Activated CD4-positive, alpha-beta memory T cell treated with anti-CD3 and anti-CD28 coated beads, Interleukin-2, amount 10 ng/mL, durations not matched to agents 7 days and 5 days (primary cell): ENCODE measurements at regions of chr1 and their contacts with region 1.

Region 1: DNA sequence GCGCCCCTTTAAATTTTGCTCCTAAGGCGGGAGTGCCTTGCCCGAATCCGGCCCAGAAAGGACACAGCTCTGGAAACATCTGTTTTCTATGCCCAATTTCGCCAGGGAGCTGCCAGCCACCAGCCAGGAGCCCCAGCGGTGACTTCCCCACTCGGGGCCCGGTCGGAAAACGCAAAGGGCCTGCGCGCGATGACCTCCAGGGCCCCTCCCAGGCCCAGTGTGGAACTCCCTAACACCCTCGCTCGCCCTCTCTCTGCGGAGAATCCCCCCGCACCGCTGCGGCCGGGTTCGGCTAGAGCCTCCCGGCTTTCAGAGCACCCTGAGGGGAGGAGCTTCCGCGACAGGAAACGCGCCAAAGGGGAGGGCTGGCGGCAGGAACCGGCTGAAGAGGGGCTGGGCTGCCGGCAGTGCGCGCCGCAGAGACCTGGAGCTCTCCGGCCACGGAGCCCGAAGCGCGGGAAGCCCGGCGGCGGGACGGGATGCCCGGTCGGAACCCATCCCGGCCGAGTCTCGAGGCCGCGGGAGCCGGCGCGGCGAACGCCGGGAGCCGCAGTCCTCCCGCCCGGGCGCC is 505 bp downstream of the CLSPN start:
- DNase-seq: peak; percentile 89
- H3K4me3 Mint-ChIP-seq: peak overlapping the region; percentile 80
- H3K27ac Mint-ChIP-seq: peak overlapping the region; percentile 74
- H3K4me1 Mint-ChIP-seq: peaks cover 40% of the 10 kb centered on the region
- H3K27me3 Mint-ChIP-seq: no peaks in the 10 kb centered on the region

Region 2: GRCh38 chr1:35505908-35506798 is 263.1 kb before region 1 on chr1:
- CTCF ChIA-PET with region 1: no interaction called
- POLR2A ChIA-PET with region 1: interaction called, 15 read pairs
- DNase-seq: peak; percentile 80
- H3K4me3 Mint-ChIP-seq: peak overlapping the region; percentile 45
- H3K27ac Mint-ChIP-seq: peak overlapping the region; percentile 93
- H3K4me1 Mint-ChIP-seq: peaks cover 52% of the 10 kb centered on the region
- H3K27me3 Mint-ChIP-seq: peaks cover 4% of the 10 kb centered on the region

Region 3: DNA sequence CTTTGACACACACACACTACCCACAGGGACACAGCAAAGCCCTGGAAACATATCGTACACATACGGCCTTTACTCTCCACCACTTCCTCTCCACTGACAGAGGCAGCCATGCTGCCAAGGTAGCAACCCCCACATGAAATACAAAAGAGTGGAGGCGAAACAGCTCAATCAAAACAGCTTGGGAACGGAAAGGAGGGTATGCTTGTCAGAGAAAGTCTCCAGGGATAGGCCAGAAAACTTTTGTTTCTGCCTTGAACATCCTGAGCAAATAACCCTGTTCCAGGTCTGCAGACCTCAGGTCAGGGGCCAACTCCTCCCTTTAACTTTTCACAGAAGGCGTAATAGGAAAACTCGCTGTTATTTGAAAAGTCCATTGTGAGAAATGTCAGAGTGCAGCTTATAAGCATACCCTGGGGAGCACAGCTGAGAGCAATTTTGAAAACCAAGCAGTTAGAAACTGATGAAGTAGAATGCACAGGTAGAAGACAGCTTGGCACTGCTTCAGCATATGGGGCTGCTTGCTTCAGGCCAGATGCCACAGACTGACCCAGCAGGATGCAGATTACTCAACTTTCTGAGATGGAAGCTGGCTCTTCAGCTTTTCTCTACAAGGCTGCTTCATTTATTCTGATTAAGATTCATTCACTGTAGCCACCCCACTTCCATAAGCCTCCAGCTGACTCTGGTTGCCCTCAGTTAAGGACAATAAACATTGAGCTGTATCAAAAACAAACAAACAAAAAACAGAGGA is 230.0 kb before region 1 on chr1:
- CTCF ChIA-PET with region 1: no interaction called
- POLR2A ChIA-PET with region 1: no interaction called
- DNase-seq: peak; percentile 58
- H3K4me3 Mint-ChIP-seq: peak overlapping the region; percentile 58
- H3K27ac Mint-ChIP-seq: peak overlapping the region; percentile 92
- H3K4me1 Mint-ChIP-seq: peaks cover 45% of the 10 kb centered on the region
- H3K27me3 Mint-ChIP-seq: no peaks in the 10 kb centered on the region

Region 4: DNA sequence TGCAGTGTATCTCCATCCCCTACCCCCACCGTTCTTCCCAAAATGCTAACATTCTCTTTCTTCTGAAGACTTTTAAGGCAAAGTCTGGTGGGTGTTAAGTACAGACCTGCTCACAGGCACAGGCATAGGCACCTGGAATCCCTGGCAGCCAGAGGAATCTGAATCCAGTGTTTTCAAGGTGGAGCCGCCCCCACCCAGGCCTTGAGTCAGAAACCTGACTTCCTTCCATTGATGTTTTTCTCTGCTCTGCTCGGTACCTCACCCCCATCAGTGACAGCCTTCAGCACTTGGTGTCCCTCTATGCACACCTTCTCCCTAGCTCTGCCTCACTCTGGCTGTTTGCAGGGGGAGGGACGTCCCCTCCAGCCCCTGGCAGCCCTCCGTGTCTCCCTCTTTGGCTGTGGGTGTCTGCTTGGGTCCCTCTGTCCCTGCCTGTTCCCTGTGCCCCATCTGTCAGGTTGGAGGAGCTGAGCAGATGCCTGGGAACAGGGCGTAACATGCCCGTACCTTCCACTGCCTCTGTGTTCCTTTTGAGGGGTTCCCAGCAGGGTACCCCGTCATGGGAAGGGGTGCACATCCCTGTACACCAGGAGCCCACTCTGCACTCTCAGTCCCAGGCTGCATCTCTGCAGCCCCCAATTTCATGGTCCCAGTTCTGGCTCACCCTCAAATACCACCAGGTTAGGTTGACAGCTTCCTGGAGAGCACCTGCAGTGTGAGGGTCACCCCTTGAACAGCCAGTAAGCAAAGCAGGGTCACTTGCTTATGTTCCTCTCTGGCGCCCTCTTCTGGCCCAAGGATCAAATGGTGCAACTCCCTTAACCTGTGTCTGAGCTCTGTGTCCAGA is 205.0 kb before region 1 on chr1:
- CTCF ChIA-PET with region 1: interaction called, 14 read pairs
- POLR2A ChIA-PET with region 1: interaction called, 7 read pairs
- DNase-seq: peak; percentile 85
- H3K4me3 Mint-ChIP-seq: no peak overlapping the region
- H3K27ac Mint-ChIP-seq: no peak overlapping the region
- H3K4me1 Mint-ChIP-seq: peaks cover 22% of the 10 kb centered on the region
- H3K27me3 Mint-ChIP-seq: no peaks in the 10 kb centered on the region

Region 5: DNA sequence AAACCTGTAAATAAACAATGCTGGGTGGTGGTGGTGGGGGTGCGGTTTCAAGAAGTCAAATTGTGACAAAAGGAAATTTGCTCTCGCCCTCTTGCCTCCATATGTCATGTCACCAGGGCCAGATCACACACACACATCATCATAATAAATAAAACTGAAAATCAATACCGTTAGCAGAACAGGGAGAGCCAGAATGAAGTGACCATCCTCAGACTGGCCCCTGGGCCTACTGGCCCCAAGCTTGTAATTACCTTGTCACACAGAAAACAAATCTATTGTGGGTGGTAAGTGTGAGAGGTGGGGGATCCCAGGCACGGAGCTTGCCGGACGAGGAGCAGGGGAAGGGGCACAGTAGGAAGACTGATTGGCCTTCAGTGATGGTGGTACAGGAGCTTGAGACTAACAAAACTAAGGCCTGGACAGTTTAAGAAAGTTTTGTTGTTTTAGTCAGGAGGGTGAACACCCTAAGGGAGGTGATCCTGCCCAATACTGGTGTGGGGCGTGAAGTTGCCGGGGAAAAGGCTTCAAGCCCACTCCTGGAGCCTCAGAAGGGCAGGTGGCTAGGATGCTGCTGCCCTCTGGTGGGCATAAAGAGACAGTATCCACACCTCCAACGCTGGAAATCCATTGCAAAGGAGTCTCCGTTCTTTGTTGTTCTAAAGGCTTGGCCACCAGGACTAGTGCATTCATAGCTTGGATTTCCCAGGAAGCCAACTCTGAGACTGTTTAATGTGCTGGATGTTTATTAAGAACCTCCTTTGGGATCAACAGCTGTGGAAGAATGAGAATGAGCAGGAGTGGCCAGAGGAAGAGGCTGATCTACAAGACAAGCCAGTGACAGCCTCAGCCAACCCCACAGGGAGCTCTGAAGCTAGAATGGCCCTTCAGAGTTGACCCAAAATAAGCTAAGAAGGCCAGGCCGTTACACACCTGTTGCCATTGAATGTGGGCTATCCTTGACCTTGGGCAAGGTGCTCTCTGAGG is 42.5 kb before region 1 on chr1:
- CTCF ChIA-PET with region 1: interaction called, 22 read pairs
- POLR2A ChIA-PET with region 1: interaction called, 11 read pairs
- DNase-seq: peak; percentile 50
- H3K4me3 Mint-ChIP-seq: no peak overlapping the region
- H3K27ac Mint-ChIP-seq: no peak overlapping the region
- H3K4me1 Mint-ChIP-seq: no peaks in the 10 kb centered on the region
- H3K27me3 Mint-ChIP-seq: no peaks in the 10 kb centered on the region

Region 6: DNA sequence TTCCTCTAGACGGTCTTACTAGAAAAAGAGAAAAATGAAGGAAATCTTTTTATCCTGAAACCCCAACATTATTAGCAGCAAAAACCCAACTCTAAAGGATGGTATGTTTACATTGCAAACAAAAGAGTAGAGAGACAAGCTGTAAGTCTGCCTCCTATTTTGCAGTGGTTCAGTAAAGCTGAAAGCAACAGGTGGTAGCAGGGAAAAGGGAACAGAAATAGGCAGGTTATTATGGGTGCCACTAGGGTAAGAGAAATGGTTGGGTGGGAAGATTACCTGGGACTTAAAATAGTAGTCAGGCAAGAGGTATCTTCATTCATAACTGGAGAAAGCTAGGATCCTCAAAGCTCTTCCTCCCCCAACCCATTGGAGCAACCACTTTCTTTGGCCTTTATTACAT is 13.2 kb before region 1 on chr1:
- CTCF ChIA-PET with region 1: interaction called, 4 read pairs
- POLR2A ChIA-PET with region 1: interaction called, 22 read pairs
- DNase-seq: no peak
- H3K4me3 Mint-ChIP-seq: no peak overlapping the region
- H3K27ac Mint-ChIP-seq: no peak overlapping the region
- H3K4me1 Mint-ChIP-seq: peaks cover 8% of the 10 kb centered on the region
- H3K27me3 Mint-ChIP-seq: no peaks in the 10 kb centered on the region

Region 7: DNA sequence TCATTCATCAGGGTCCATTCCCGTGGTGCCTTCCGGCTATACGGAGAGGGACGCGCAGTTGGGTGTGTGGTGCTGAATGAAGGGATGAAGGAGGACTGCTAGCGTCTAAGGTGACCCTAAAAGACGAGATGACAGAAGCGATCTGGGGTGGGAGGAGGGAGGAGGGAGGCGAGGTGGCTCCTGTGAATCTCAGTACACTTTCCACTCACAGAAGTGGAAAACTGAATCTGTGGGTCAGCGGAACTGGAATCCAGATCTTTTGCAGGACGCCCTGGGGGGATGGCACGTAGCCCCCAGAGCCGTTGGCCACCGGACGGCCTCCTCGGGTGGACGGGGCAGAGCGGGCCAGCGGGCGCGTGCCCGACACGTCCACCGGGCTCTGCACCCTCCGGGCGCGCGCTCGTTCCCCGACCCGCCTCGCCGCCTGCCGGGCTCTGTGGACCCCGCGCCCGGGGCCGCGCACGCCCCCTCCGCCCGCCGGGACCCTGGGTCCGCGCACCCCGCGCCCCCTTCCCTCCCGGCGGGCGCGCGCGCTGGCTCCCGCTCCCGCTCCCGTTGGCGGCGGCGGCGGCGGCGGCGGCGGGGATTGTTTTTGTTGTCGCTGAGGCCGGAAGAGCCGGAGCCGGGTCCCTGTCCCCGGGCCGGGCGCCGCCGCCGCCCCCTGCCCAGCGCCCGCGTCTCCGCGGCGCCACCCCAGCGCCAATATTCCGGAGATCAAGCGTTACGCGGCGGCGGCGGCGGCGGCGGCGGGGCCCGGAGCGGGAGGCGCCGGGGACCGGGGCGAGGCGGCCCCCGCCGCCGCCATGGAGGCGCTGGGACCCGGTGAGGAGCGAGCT is 38.6 kb after region 1 on chr1 and contains the start of gene AGO4:
- CTCF ChIA-PET with region 1: interaction called, 4 read pairs
- POLR2A ChIA-PET with region 1: interaction called, 24 read pairs
- DNase-seq: peak; percentile 46
- H3K4me3 Mint-ChIP-seq: peak within 1 kb of the TSS; percentile 90
- H3K27ac Mint-ChIP-seq: peak within 1 kb of the TSS; percentile 84
- H3K4me1 Mint-ChIP-seq: peaks cover 50% of the 10 kb centered on the region
- H3K27me3 Mint-ChIP-seq: no peaks in the 10 kb centered on the region
- total RNA-seq, gene AGO4: 16.5 to 20.9 TPM

Region 8: DNA sequence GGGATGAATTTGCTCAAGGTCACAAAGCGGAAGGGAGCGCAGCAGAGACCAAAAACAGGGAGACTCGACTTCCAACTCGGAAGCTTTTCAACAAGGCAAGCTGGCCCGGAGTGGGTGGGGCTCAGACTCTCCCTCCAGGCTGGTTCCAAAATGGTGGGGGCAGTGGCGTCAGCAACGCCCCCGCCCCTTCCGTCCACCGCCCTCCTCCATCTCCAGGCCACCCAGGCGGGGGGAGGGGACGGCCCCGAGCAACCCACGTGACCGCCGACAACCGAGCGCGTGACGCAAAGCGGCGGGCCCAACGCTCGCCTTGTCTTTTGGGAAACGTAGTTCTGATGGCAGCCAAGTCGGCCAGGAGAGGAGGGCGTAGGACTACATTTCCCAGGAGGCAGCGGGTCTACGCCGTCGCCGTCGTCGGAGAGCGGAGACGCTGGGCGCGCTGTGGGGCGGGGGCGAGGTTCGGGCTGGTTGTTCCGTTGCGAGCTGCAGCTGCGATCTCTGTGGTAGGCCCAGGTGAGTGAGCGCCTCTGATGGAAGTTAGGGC is 454.8 kb after region 1 on chr1 and contains the start of gene THRAP3:
- CTCF ChIA-PET with region 1: no interaction called
- POLR2A ChIA-PET with region 1: interaction called, 12 read pairs
- DNase-seq: peak; percentile 100
- H3K4me3 Mint-ChIP-seq: peak within 1 kb of the TSS; percentile 94
- H3K27ac Mint-ChIP-seq: peak within 1 kb of the TSS; percentile 99
- H3K4me1 Mint-ChIP-seq: peaks cover 32% of the 10 kb centered on the region
- H3K27me3 Mint-ChIP-seq: no peaks in the 10 kb centered on the region
- total RNA-seq, gene THRAP3: 128 to 133 TPM